T-cell (primary cell): ENCODE measurements at regions of chr1 and their contacts with region 1.

Region 1: DNA sequence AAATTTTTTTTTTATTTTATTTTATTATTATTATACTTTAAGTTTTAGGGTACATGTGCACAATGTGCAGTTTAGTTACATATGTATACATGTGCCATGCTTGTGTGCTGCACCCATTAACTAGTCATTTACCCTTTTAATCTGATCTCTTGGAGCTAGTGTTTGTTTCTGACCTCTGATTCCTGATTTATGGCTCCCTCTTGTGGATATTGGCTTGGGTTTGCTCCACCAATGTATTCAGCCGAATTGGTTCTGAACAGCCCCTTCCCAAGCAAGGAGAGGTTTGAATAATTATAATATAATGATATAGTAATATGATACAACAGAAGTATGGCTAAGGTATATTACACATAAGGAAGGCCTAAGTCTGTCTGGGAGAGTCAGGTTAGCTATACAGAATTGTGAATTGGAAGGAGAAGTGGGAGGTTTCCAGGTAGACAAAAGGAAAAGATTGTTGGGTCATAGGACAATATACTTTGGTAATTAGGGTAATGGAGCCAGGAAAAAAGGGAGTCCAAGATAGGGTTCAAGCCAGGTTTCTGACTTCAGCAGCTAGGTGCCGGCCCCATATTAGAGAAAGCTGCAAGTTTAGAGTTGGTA is 53.1 kb upstream of the HMCN1 start:
- DNase-seq: peak in 3 of 35 experiments; percentile 8 to 69 (median 9)
- ATAC-seq: peak; percentile 41 to 64 (median 52)
- H3K4me3 ChIP-seq: no peak overlapping the region
- H3K4me3 Mint-ChIP-seq: no peak overlapping the region
- H3K27ac ChIP-seq: no peak overlapping the region
- H3K27ac Mint-ChIP-seq: no peak overlapping the region
- H3K4me1 ChIP-seq: peaks cover 7 to 18% of the 10 kb centered on the region in 2 experiments
- H3K4me1 Mint-ChIP-seq: peaks cover 25 to 36% (median 34%) of the 10 kb centered on the region in 3 donors
- H3K27me3 ChIP-seq: no peaks in the 10 kb centered on the region
- H3K27me3 Mint-ChIP-seq: peaks cover 0 to 4% of the 10 kb centered on the region in 2 donors

Region 2: DNA sequence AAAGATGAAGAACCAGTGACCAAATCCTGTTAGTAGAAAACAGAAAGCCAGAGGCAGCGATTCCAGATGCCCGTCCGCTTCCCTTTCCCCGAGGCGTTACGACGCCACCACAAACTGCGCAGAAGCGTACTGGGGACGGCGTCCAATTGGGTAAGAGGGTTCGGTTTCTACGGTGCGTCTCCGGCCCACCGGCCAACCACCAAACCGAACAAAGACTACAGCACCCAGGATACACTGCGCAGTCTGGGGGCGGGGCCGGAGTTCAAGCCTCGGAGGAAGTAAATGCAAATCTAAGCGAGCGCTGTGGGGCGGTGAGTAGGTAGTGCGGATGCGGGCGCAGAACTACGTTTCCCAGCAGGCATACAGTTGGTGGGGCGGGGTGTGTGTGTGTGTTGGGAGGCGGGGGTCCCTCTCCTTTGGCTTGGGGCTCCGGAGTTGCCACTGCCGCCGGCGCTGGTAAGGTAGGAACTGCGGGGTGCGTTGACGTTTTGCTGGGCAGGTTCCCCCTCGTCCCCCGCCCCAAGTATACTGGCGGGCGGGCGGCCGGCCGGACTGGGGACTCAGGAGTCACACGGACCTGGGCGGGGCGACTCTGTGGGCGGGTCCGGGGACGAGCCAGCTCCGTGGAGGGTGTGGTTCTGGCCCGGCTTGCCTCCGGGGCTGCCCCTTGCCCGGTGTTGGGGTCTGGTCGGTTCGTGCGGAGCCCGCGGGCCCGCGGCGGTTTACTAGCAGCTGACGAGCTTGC is 524.1 kb before region 1 on chr1 and contains the starts of genes SWT1 and TRMT1L:
- CTCF ChIA-PET with region 1: interaction called in 1 of 2 experiments, 11 read pairs
- POLR2A ChIA-PET with region 1: no interaction called
- DNase-seq: peak; percentile 95 to 99 (median 97)
- ATAC-seq: peak; percentile 91 to 94 (median 91)
- H3K4me3 ChIP-seq: peak within 1 kb of the TSS; percentile 97 to 99
- H3K4me3 Mint-ChIP-seq: peak within 1 kb of the TSS; percentile 98 to 100 (median 98)
- H3K27ac ChIP-seq: peak within 1 kb of the TSS; percentile 99
- H3K27ac Mint-ChIP-seq: peak within 1 kb of the TSS; percentile 97 to 99
- H3K4me1 ChIP-seq: peaks cover 11 to 25% of the 10 kb centered on the region in 2 experiments
- H3K4me1 Mint-ChIP-seq: peaks cover 50 to 53% (median 53%) of the 10 kb centered on the region in 3 donors
- H3K27me3 ChIP-seq: no peaks in the 10 kb centered on the region
- H3K27me3 Mint-ChIP-seq: no peaks in the 10 kb centered on the region
- total RNA-seq, gene SWT1: 6.4 to 9.8 (median 8.5) TPM
- total RNA-seq, gene TRMT1L: 6.2 to 23.4 (median 22.1) TPM

Region 3: DNA sequence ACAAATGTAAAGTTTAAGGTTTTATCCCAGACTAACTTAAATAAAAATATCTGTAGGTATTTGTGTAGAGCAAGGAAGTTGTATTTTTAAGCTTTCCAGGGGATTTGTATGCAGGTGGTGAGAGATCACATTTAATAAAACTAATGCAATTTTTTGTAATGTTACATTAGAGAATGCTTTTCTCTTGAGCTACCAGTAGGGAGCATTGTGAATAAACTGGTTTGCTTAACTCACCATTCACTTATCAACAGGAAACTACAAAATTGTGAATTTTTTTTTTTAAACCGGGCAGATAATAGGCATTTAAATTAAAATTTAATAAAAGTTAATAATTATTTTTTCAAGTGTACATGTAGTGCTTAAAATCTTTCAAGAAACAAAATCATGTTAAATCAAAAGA is 442.7 kb before region 1 on chr1:
- CTCF ChIA-PET with region 1: interaction called, 19 to 32 read pairs
- POLR2A ChIA-PET with region 1: interaction called in 1 of 2 experiments, 3 read pairs
- DNase-seq: peak in 1 of 35 experiments; percentile 50
- ATAC-seq: peak in 3 of 4 experiments; percentile 42 to 71 (median 69)
- H3K4me3 ChIP-seq: no peak overlapping the region
- H3K4me3 Mint-ChIP-seq: peak overlapping the region in 2 of 3 donors; percentile 31 to 35
- H3K27ac ChIP-seq: no peak overlapping the region
- H3K27ac Mint-ChIP-seq: peak overlapping the region in 1 of 2 donors; percentile 5
- H3K4me1 ChIP-seq: peaks cover 0 to 14% of the 10 kb centered on the region in 2 experiments
- H3K4me1 Mint-ChIP-seq: peaks cover 30 to 38% (median 34%) of the 10 kb centered on the region in 3 donors
- H3K27me3 ChIP-seq: no peaks in the 10 kb centered on the region
- H3K27me3 Mint-ChIP-seq: no peaks in the 10 kb centered on the region

Region 4: DNA sequence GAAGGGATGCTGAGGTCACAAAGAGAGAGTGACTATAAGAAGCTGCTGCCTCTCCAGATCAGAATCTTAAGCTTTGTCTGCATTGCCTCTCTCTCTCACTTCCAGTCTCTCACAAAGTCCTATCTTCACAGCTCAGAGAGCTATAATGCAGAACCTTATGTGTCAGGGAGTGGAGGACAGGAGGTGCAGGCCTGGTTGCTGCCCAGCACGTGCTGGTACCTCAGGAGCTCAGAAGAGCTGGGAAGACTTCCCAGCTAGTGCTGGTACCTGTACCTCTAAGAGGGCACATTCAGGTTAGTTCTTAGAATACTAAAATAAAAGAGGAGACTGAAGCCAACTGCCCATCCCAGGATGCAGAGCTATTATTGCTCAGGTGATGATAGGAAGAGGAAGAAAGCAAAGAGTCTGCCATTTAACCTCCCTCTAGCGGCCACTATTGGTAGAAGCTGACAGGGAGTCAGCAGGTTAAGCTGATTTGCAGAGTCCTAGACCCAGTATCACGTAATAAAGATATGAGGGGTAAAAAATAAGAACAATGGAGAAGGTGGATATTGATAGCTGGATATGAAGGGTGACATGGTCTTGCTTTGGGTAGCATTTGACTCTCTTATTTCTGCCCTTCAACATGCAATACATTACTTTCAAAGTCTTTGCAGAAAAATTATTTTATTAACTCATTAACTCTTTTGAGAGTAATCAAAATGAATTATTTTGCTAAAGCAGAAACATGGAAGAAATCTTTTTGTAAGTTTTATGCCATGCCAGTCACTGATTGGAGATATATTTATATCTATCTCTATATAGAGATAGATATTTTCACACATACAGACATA is 85.1 kb before region 1 on chr1:
- CTCF ChIA-PET with region 1: interaction called, 3 to 10 read pairs
- POLR2A ChIA-PET with region 1: no interaction called
- DNase-seq: peak in 34 of 35 experiments; percentile 7 to 74 (median 46)
- ATAC-seq: peak; percentile 63 to 82 (median 76)
- H3K4me3 ChIP-seq: no peak overlapping the region
- H3K4me3 Mint-ChIP-seq: no peak overlapping the region
- H3K27ac ChIP-seq: no peak overlapping the region
- H3K27ac Mint-ChIP-seq: peak overlapping the region; percentile 41 to 75
- H3K4me1 ChIP-seq: peaks cover 9 to 10% of the 10 kb centered on the region in 2 experiments
- H3K4me1 Mint-ChIP-seq: peaks cover 26 to 37% (median 26%) of the 10 kb centered on the region in 3 donors
- H3K27me3 ChIP-seq: no peaks in the 10 kb centered on the region
- H3K27me3 Mint-ChIP-seq: no peaks in the 10 kb centered on the region

Region 5: DNA sequence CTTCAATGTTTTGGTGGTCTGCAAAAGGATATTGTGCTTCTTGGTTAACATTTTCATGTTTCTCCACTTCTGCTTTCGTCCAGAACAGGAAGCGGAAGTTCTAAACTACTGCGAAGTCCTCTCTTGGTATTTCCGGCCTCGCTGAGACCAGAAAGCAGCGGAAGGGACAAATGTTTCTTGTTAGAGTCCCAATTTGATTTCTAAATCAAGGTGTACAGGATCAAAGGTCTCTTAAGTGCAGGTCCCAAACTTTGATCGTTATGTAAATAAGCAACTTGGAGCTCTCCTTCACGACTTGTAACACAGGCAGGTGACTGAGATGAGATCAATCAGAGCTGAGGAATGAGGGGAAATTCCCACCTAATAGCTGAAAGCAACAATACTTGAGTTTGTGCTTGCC is 12.9 kb after region 1 on chr1:
- CTCF ChIA-PET with region 1: interaction called, 4 to 10 read pairs
- POLR2A ChIA-PET with region 1: interaction called in 1 of 2 experiments, 3 read pairs
- DNase-seq: peak in 13 of 35 experiments; percentile 2 to 56 (median 13)
- ATAC-seq: peak; percentile 27 to 81 (median 58)
- H3K4me3 ChIP-seq: peak overlapping the region; percentile 38
- H3K4me3 Mint-ChIP-seq: peak overlapping the region; percentile 73 to 82 (median 80)
- H3K27ac ChIP-seq: peak overlapping the region; percentile 74
- H3K27ac Mint-ChIP-seq: peak overlapping the region; percentile 94 to 96
- H3K4me1 ChIP-seq: peaks cover 11 to 20% of the 10 kb centered on the region in 2 experiments
- H3K4me1 Mint-ChIP-seq: peaks cover 19 to 23% (median 21%) of the 10 kb centered on the region in 3 donors
- H3K27me3 ChIP-seq: no peaks in the 10 kb centered on the region
- H3K27me3 Mint-ChIP-seq: peaks cover 2 to 4% of the 10 kb centered on the region in 2 donors

Region 6: GRCh38 chr1:185821612-185822385 is 140.7 kb after region 1 on chr1:
- CTCF ChIA-PET with region 1: no interaction called
- POLR2A ChIA-PET with region 1: no interaction called
- DNase-seq: no peak
- ATAC-seq: no peak
- H3K4me3 ChIP-seq: no peak overlapping the region
- H3K4me3 Mint-ChIP-seq: no peak overlapping the region
- H3K27ac ChIP-seq: no peak overlapping the region
- H3K27ac Mint-ChIP-seq: no peak overlapping the region
- H3K4me1 ChIP-seq: no peaks in the 10 kb centered on the region
- H3K4me1 Mint-ChIP-seq: no peaks in the 10 kb centered on the region
- H3K27me3 ChIP-seq: peaks cover 0 to 2% of the 10 kb centered on the region in 2 experiments
- H3K27me3 Mint-ChIP-seq: peaks cover 21 to 22% of the 10 kb centered on the region in 2 donors